Activated CD8-positive, alpha-beta T cell treated with anti-CD3 and anti-CD28 coated beads, Interleukin-2, amount 10 ng/mL, durations not matched to agents 7 days and 5 days (primary cell): ENCODE measurements at regions of chr18 and their contacts with region 1.

Region 1: GRCh38 chr18:46173393-46174341 is 69.5 kb downstream of the HAUS1 start:
- DNase-seq: peak; percentile 95
- ATAC-seq: peak; percentile 90
- H3K4me3 Mint-ChIP-seq: peak overlapping the region; percentile 97
- H3K27ac Mint-ChIP-seq: peak overlapping the region; percentile 99
- H3K4me1 Mint-ChIP-seq: peaks cover 63% of the 10 kb centered on the region
- H3K27me3 Mint-ChIP-seq: no peaks in the 10 kb centered on the region

Region 2: GRCh38 chr18:46097801-46098615 is 75.7 kb before region 1 on chr18 and contains the start of gene ATP5F1A:
- CTCF ChIA-PET with region 1: interaction called, 12 read pairs
- POLR2A ChIA-PET with region 1: interaction called, 4 read pairs
- DNase-seq: peak; percentile 91
- ATAC-seq: peak; percentile 88
- H3K4me3 Mint-ChIP-seq: peak within 1 kb of the TSS; percentile 98
- H3K27ac Mint-ChIP-seq: peak within 1 kb of the TSS; percentile 95
- H3K4me1 Mint-ChIP-seq: peaks cover 32% of the 10 kb centered on the region
- H3K27me3 Mint-ChIP-seq: no peaks in the 10 kb centered on the region
- total RNA-seq, gene ATP5F1A: 377 to 385 TPM

Region 3: DNA sequence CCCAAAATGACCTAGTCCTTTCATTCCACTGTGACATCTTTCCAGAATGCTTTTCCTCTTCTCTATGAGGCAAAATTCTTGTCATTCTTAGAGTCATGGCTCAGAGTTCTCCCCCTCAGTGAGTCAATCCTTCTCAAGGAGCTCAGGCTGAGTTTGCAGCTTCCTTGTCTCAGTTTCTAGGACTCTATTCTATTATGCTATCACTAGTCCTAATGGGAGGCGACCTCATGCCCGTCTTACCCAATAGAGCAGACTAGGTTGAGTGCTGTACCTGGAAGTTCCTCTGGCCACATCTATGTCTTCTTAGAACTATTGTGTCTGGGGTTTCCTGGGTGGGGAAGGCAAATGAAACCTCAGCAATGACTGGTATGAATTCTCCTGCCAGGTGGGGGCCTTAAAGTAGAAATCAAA is 18.0 kb before region 1 on chr18:
- CTCF ChIA-PET with region 1: interaction called, 219 read pairs
- POLR2A ChIA-PET with region 1: interaction called, 21 read pairs
- DNase-seq: peak; percentile 85
- ATAC-seq: peak; percentile 89
- H3K4me3 Mint-ChIP-seq: peak overlapping the region; percentile 70
- H3K27ac Mint-ChIP-seq: peak overlapping the region; percentile 98
- H3K4me1 Mint-ChIP-seq: peaks cover 88% of the 10 kb centered on the region
- H3K27me3 Mint-ChIP-seq: no peaks in the 10 kb centered on the region

Region 4: GRCh38 chr18:46220116-46220515 is 46.4 kb after region 1 on chr18:
- CTCF ChIA-PET with region 1: interaction called, 135 read pairs
- POLR2A ChIA-PET with region 1: interaction called, 6 read pairs
- DNase-seq: no peak
- ATAC-seq: no peak
- H3K4me3 Mint-ChIP-seq: no peak overlapping the region
- H3K27ac Mint-ChIP-seq: no peak overlapping the region
- H3K4me1 Mint-ChIP-seq: peaks cover 64% of the 10 kb centered on the region
- H3K27me3 Mint-ChIP-seq: no peaks in the 10 kb centered on the region

Region 5: GRCh38 chr18:46250084-46250811 is 76.6 kb after region 1 on chr18:
- CTCF ChIA-PET with region 1: interaction called, 25 read pairs
- POLR2A ChIA-PET with region 1: interaction called, 10 read pairs
- DNase-seq: peak; percentile 81
- ATAC-seq: peak; percentile 95
- H3K4me3 Mint-ChIP-seq: peak overlapping the region; percentile 67
- H3K27ac Mint-ChIP-seq: peak overlapping the region; percentile 93
- H3K4me1 Mint-ChIP-seq: peaks cover 62% of the 10 kb centered on the region
- H3K27me3 Mint-ChIP-seq: no peaks in the 10 kb centered on the region

Region 6: DNA sequence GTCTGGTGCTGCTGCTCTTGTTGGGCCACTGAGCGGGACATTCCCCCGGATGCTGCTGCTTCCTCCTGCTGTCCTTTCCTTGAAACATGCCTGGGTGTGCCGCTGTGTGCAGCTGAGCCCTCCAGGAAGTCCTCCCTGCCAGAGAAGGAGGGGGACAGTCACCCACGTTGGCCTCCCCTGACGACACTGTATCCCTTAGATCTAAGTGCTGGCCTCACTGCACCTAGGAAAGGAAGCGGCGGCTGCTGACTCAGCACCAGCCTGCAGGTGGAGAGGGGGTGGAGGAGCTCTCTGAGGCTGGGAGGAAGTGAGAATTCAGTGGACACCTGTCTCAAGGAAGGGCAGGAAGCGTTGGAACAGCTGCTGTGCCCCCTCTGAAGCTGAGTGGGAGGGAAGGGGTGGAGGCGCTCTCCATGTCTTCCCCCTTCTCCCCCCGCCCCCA is 170.3 kb after region 1 on chr18:
- CTCF ChIA-PET with region 1: interaction called, 10 read pairs
- POLR2A ChIA-PET with region 1: no interaction called
- DNase-seq: peak; percentile 81
- ATAC-seq: peak; percentile 90
- H3K4me3 Mint-ChIP-seq: peak overlapping the region; percentile 27
- H3K27ac Mint-ChIP-seq: peak overlapping the region; percentile 80
- H3K4me1 Mint-ChIP-seq: peaks cover 56% of the 10 kb centered on the region
- H3K27me3 Mint-ChIP-seq: peaks cover 4% of the 10 kb centered on the region

Region 7: DNA sequence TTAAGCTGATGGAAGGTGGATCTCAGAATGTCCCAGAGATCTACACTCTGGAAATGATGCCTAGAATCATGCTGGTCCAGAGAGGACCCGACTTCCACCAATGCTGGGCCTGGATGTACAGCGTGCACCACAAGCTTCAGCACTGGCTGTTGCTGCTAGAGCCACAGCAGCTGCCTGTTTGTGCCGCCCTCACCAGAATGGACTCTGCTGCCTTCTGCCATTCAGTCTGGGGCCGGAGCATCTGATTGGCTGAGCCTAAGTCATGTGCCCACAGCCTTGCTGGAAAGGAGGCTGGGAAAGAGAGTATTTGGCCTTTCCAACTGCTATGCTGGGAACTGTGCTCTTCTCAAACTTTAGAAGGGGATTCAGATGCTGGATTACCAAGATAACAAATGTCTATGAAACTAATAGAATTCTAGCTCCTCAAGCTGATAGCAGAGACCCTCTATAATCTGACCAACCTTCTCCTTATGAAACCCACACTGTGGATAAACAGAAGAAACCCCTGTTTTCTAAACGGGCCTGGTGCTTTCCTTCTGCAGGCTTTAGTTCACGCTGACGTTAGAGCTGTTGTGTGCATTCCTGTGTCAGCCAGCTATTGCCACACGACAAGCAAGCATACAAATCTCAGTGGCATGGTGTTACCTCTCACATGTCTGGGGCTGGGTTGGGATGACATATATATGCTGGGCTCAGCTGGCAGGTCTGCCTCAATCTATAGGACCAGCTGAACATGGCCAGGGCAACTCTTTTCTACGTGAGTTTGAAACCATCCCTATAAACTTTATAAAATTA is 487.5 kb after region 1 on chr18:
- CTCF ChIA-PET with region 1: interaction called, 31 read pairs
- POLR2A ChIA-PET with region 1: interaction called, 4 read pairs
- DNase-seq: no peak
- ATAC-seq: no peak
- H3K4me3 Mint-ChIP-seq: no peak overlapping the region
- H3K27ac Mint-ChIP-seq: no peak overlapping the region
- H3K4me1 Mint-ChIP-seq: peaks cover 3% of the 10 kb centered on the region
- H3K27me3 Mint-ChIP-seq: peaks cover 14% of the 10 kb centered on the region